Activated CD4-positive, alpha-beta memory T cell treated with anti-CD3 and anti-CD28 coated beads for 36 hours (primary cell): ENCODE measurements at regions of chr14 and their contacts with region 1.

Region 1: DNA sequence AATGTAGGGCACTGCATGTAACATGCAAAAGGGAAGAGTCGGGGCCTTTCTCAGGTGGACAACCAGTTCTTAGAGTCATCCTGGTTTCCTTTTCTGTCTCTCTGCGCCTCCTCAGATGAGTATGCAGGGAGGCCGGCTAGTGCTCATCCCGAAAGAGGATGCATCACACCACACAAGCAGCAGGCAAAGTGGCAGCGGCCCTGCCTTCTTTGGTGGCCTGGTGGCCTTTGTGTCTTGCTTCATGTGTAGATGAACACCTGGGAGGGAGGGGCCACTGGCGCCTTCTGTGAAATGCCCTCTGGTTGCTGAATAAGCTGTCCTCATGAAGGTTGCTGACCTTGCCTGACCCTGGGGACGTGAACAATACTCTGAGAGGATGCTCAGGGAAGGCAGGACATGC is 18.0 kb downstream of the SLC24A4 start:
- DNase-seq: peak; percentile 86
- H3K4me3 Mint-ChIP-seq: peak overlapping the region; percentile 28
- H3K27ac Mint-ChIP-seq: peak overlapping the region; percentile 83
- H3K4me1 Mint-ChIP-seq: peaks cover 29% of the 10 kb centered on the region
- H3K27me3 Mint-ChIP-seq: peaks cover 56% of the 10 kb centered on the region

Region 2: GRCh38 chr14:92215579-92215978 is 125.4 kb before region 1 on chr14:
- CTCF ChIA-PET with region 1: no interaction called
- POLR2A ChIA-PET with region 1: no interaction called
- intact Hi-C with region 1: no loop called
- DNase-seq: no peak
- H3K4me3 Mint-ChIP-seq: no peak overlapping the region
- H3K27ac Mint-ChIP-seq: no peak overlapping the region
- H3K4me1 Mint-ChIP-seq: no peaks in the 10 kb centered on the region
- H3K27me3 Mint-ChIP-seq: peaks cover 14% of the 10 kb centered on the region

Region 3: DNA sequence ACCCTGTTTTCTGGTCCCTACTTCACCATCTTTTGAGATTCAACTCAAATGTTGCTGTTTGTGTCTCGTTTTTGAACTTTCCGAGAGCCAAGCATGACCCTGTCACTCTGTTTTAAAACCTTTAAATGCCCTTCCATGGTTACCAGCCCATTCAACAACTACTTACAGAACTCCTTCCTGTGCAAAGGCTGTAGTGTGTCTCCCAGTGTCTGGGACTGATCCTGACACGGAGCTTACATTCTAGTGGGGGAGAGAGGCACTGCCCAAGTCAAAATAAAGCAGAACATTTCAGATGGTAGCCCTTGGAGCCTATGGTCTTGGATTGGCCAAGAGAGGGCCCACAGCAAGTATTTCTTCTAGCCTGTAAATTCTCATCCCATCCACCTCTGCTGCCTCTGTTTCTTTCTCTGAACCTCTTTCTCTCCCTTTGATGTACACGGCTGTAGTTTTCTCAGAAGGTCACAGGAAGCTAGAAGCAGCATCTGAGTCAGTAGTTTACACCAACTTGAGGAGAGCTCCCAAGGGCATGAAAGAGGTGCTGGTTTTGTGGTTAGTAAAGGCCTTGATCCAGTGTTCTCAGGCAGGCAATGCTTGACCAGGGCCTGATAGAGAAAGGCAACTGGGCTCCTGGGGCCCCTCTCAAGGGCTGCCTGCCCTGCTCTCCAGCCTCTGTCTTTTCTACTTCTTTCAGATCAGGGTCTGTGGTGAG is 60.2 kb before region 1 on chr14:
- CTCF ChIA-PET with region 1: no interaction called
- POLR2A ChIA-PET with region 1: no interaction called
- intact Hi-C with region 1: loop called (anchors 5 kb)
- DNase-seq: no peak
- H3K4me3 Mint-ChIP-seq: no peak overlapping the region
- H3K27ac Mint-ChIP-seq: peak overlapping the region; percentile 5
- H3K4me1 Mint-ChIP-seq: peaks cover 18% of the 10 kb centered on the region
- H3K27me3 Mint-ChIP-seq: peaks cover 3% of the 10 kb centered on the region

Region 4: GRCh38 chr14:92481386-92481785 is 140.5 kb after region 1 on chr14:
- CTCF ChIA-PET with region 1: no interaction called
- POLR2A ChIA-PET with region 1: no interaction called
- intact Hi-C with region 1: no loop called
- DNase-seq: no peak
- H3K4me3 Mint-ChIP-seq: no peak overlapping the region
- H3K27ac Mint-ChIP-seq: no peak overlapping the region
- H3K4me1 Mint-ChIP-seq: no peaks in the 10 kb centered on the region
- H3K27me3 Mint-ChIP-seq: peaks cover 12% of the 10 kb centered on the region

Region 5: DNA sequence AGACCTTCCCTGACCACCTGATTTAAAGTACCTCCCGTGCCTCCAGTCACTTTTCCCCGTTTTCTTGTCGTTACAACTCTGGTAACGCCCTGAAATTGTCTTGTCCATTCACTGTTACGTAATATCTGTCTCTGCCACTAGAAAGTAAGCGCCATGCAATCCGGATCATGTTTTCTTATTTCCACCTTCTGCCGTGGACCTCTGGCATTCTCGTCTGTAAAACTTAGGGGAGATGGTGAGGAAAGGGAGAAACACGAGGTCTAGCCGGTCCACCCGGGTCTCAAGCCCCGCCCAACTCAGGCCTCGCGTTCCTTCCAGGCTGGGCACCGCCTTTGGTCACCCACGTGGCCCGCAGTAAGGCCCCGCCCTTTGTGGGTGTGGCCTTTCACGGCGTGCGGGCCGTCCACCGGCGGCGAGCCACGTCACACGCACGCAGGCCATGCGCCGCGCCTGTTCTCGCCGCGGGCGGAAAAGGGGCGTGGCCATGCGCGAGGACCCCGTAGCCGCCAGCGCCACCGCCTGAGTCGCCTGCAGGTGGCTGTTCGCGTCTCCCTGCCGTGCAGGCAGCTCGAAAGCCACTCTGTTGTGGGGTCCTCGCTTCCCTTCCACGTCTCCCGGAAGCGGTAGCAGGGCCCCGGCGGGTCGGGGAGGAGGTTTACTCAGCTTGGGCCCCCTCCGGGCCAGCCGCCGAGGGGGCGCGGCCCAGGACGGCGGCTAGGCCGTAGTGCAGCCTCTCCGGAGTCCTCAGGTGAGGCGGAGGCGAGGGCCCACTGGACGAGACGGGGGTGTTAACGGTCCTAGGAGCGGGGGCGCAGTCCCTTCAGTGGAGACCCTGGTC is 453.0 kb after region 1 on chr14 and contains the start of gene GOLGA5:
- CTCF ChIA-PET with region 1: no interaction called
- POLR2A ChIA-PET with region 1: no interaction called
- intact Hi-C with region 1: loop called (anchors 5 kb)
- DNase-seq: peak; percentile 98
- H3K4me3 Mint-ChIP-seq: peak within 1 kb of the TSS; percentile 97
- H3K27ac Mint-ChIP-seq: peak within 1 kb of the TSS; percentile 91
- H3K4me1 Mint-ChIP-seq: peaks cover 35% of the 10 kb centered on the region
- H3K27me3 Mint-ChIP-seq: no peaks in the 10 kb centered on the region
- total RNA-seq, gene GOLGA5: 20.7 to 22.5 TPM